H1 (cell line): ENCODE measurements at regions of chr3 and their contacts with region 1.

Region 1: DNA sequence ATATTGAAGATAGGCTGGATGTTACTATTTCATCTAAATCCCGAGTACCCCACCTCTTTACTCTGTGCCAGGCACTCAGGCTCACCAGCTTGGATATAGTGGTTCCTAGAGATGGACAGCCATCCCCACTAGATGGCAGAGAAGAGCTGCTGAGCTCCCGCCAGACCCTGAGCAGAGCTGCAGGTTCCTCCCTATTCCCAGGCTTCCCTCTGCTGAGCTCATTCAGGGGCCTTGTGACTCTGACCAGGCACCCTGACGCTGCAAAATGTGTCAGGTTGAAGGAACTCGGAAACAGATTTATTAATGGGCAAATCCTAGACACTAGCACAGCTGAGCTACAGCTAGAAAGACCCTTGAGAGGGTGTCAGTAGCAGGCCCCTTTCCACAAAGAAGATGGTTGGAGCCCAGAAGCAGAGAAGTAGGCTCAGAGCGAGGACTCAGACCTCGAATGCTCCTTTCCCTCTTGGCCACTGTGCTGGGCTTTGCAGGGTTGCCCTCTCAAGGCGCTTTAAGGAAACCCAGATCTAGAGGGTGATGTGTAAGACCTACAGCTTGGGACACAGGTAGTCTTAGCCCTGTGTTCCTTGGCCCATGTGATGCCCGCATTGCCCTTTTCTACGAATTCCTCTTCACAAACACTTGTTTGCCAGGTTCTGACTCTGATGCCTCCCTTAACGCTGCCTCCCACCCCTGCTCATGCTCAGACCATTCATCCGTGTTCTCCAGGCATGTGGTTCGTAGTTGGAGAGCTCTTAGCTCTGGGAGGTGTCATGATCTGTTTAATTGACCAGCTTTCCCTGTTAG is 38.0 kb upstream of the RHO start:
- DNase-seq: peak; percentile 50 to 73
- H3K4me3 ChIP-seq: no peak overlapping the region
- H3K27ac ChIP-seq: no peak overlapping the region; the same call in 1 of the 2 replicates
- H3K4me1 ChIP-seq: peaks cover 5 to 18% (median 9%) of the 10 kb centered on the region in 4 experiments
- H3K27me3 ChIP-seq: no peaks in the 10 kb centered on the region
- CTCF ChIP-seq: peak; percentile 79 to 94 (median 91)
- EP300 ChIP-seq: no peak
- POLR2A ChIP-seq: no peak
- RAD21 ChIP-seq: peak; percentile 98 to 99

Region 2: GRCh38 chr3:129383292-129383860 is 107.1 kb before region 1 on chr3:
- CTCF ChIA-PET with region 1: interaction called, 11 read pairs
- POLR2A ChIA-PET with region 1: no interaction called
- DNase-seq: peak; percentile 39 to 75
- H3K4me3 ChIP-seq: no peak overlapping the region
- H3K27ac ChIP-seq: no peak overlapping the region
- H3K4me1 ChIP-seq: no peaks in the 10 kb centered on the region; a peak in 2 of 7 replicates
- H3K27me3 ChIP-seq: no peaks in the 10 kb centered on the region
- CTCF ChIP-seq: peak; percentile 81 to 93 (median 93)
- EP300 ChIP-seq: no peak
- POLR2A ChIP-seq: no peak
- RAD21 ChIP-seq: peak; percentile 87 to 92

Region 3: GRCh38 chr3:129560901-129561594 is 70.6 kb after region 1 on chr3:
- CTCF ChIA-PET with region 1: interaction called, 93 read pairs
- POLR2A ChIA-PET with region 1: no interaction called
- DNase-seq: no peak
- H3K4me3 ChIP-seq: no peak overlapping the region
- H3K27ac ChIP-seq: no peak overlapping the region
- H3K4me1 ChIP-seq: peaks cover 0 to 11% (median 6%) of the 10 kb centered on the region in 4 experiments; a peak in 4 of 7 replicates
- H3K27me3 ChIP-seq: no peaks in the 10 kb centered on the region
- CTCF ChIP-seq: no peak
- EP300 ChIP-seq: no peak
- POLR2A ChIP-seq: no peak
- RAD21 ChIP-seq: no peak

Region 4: DNA sequence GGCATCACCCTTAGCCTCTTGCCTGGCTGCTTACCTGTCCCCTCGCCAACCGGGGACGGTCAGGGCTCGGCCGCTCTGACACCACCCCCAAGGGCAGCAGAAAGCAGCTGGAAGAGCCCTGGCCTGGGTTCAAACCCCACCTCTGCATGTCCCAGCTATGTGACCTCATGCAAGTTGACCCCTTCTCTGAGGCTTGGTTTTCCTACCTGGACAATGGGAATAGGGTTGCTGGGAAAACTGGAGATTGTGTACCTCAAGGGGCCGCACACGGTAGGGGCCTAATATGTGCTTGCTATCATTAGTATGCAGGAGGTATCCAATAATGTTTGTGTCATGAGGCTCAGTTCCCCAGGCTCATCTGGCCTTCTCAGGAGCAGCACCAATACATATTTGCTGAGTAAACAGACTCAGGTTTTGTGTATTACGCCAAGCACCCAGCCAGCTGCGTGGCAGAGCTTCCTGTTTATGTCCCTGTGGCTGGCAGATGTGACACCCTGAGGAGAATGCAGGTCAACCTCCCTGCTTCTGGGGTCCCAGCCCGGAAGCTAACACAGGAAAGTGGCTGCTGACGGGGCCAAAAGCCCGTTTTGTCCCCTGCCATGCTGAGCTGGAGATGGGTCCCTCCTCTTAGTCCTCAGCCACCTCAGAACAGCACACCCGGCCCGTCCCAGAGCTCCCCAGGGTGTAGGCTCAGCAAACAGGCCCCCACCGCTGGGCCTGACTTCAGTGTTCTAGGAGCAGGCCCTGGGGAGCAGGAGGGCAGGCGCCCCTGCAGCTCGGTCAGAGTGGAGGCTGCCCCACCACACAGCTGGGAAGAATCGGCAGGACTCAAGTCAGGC is 86.3 kb after region 1 on chr3:
- CTCF ChIA-PET with region 1: interaction called, 19 read pairs
- POLR2A ChIA-PET with region 1: no interaction called
- DNase-seq: no peak
- H3K4me3 ChIP-seq: no peak overlapping the region
- H3K27ac ChIP-seq: no peak overlapping the region
- H3K4me1 ChIP-seq: peaks cover 0 to 19% (median 2%) of the 10 kb centered on the region in 4 experiments; a peak in 4 of 7 replicates
- H3K27me3 ChIP-seq: no peaks in the 10 kb centered on the region
- CTCF ChIP-seq: no peak
- EP300 ChIP-seq: no peak
- POLR2A ChIP-seq: no peak
- RAD21 ChIP-seq: no peak

Region 5: GRCh38 chr3:129627429-129628168 is 137.2 kb after region 1 on chr3:
- CTCF ChIA-PET with region 1: interaction called, 28 read pairs
- POLR2A ChIA-PET with region 1: no interaction called
- DNase-seq: peak in 1 of 2 experiments; percentile 80
- H3K4me3 ChIP-seq: peak overlapping the region; percentile 61 to 85 (median 78)
- H3K27ac ChIP-seq: peak overlapping the region; percentile 8; the same call in 1 of the 2 replicates
- H3K4me1 ChIP-seq: peaks cover 3 to 9% (median 5%) of the 10 kb centered on the region in 4 experiments
- H3K27me3 ChIP-seq: no peaks in the 10 kb centered on the region
- CTCF ChIP-seq: peak in 2 of 3 experiments; percentile 86 to 92; a peak in 3 of 4 replicates
- EP300 ChIP-seq: no peak
- POLR2A ChIP-seq: peak in 1 of 2 experiments; percentile 66; a peak in 2 of 3 replicates
- RAD21 ChIP-seq: peak; percentile 98 to 99